Right ventricle myocardium inferior (tissue), 1 donor: ENCODE measurements at regions of chr6 and their contacts with region 1.

Region 1: GRCh38 chr6:30717042-30717844 is at the start of gene MDC1:
- DNase-seq: peak; percentile 100
- ATAC-seq: peak; percentile 88
- total RNA-seq, gene MDC1: 13.1 TPM

Region 2: GRCh38 chr6:30489081-30490025 is 227.9 kb before region 1 on chr6 and contains the start of gene HLA-E:
- intact Hi-C with region 1: loop called (anchors 10 kb)
- DNase-seq: peak; percentile 91
- ATAC-seq: peak; percentile 96
- total RNA-seq, gene HLA-E: 152 TPM

Region 3: GRCh38 chr6:30616811-30617564 is 100.3 kb before region 1 on chr6 and contains the start of gene PPP1R10:
- intact Hi-C with region 1: loop called (anchors 1 kb)
- DNase-seq: peak; percentile 99
- ATAC-seq: peak; percentile 88
- total RNA-seq, gene PPP1R10: 33.5 TPM

Region 4: DNA sequence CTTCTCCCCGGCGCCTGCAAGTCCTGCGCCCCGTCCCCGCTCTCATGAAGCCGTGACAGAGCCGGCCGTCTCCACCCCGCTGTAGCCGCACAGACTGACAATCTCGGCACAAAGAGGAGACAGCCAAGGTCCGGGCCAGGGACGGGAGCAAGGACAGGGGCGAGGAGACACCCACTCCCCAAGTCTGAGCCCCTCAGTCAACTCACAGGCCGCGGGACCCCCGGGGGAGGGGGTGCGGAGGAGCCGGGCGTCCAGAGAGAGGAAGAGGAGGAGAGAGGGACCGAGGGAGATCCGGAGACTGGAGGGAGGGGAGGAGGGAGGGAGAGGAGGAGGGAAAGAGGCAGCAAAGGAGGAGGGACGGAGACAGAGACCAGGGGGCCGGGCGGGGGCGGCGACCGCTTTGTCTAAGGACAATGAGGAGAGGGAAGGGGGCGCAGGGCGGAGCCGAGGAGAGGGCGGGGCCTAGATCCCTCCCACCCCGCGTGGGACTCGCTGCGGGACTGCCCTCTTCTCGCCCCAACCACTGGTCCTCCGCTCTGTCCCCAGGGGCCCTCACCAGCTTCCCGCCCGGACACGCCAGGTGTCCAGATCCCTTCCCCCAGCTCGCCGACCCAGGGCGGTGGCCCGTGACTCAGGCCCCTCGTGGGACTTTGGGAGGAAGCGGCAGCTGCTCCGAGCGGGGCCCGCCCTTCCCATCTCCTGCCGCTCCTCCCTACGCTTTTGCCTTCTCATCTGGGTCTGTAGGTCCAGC is 30.2 kb before region 1 on chr6:
- intact Hi-C with region 1: loop called (anchors 1 kb)
- DNase-seq: peak; percentile 99
- ATAC-seq: peak; percentile 82

Region 5: GRCh38 chr6:30877419-30878371 is 160.5 kb after region 1 on chr6:
- intact Hi-C with region 1: loop called (anchors 2 kb)
- DNase-seq: peak; percentile 95
- ATAC-seq: peak; percentile 93